ENCODE measurements at regions of chr5 and their contacts with region 1.

Region 1: DNA sequence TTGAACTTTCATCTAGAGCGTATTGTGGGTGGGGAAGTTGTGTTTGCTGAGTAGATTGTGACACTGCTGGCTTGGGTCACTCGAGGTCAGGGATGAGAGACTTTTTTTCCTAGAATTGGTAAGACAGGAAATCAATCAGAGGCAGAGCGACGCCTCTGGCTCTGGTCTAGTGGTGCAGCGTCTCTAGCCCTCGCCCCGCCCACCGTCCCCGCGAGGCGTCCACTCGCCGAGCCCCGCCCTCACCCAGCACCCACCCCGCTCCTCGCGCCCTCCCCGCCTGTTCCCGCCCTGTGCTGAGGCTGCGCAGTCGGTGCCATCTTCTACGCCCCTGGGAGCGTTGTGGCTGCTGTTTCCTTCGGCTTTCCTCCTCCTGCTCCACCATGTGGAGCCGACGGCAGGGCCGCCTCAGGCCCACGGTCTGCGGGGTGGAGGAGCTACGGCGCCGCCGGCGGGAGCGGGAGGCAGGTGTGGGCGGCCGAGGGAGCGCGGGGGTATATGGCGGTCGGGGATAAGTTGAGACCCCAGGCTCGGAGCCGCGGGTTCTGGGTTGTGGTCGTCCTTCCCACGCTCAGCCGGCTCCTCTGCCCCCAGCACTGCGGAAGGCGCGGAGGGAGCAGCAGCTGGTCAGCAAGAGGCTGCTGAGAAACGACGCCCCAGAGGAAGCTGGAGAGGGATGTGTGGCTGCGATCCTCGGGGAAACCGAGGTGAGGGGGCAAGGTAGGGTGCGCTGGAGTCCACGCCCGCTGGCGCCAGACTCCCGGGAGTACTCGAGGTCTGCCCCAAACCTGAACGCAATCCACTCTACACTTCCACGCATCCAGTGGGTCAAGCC is at the start of gene TMCO6:
- DNase-seq: peak; percentile 86
- ATAC-seq: peak; percentile 98
- H3K4me3 ChIP-seq: peak within 1 kb of the TSS; percentile 84 to 86
- H3K27ac ChIP-seq: peak within 1 kb of the TSS; percentile 92
- H3K4me1 ChIP-seq: 0 out of 2 replicates have a peak, but pooled peaks cover 5% of the 10 kb centered on the region
- H3K27me3 ChIP-seq: no peaks in the 10 kb centered on the region
- CTCF ChIP-seq: peak; percentile 87
- total RNA-seq, gene TMCO6: 18.9 TPM

Region 2: DNA sequence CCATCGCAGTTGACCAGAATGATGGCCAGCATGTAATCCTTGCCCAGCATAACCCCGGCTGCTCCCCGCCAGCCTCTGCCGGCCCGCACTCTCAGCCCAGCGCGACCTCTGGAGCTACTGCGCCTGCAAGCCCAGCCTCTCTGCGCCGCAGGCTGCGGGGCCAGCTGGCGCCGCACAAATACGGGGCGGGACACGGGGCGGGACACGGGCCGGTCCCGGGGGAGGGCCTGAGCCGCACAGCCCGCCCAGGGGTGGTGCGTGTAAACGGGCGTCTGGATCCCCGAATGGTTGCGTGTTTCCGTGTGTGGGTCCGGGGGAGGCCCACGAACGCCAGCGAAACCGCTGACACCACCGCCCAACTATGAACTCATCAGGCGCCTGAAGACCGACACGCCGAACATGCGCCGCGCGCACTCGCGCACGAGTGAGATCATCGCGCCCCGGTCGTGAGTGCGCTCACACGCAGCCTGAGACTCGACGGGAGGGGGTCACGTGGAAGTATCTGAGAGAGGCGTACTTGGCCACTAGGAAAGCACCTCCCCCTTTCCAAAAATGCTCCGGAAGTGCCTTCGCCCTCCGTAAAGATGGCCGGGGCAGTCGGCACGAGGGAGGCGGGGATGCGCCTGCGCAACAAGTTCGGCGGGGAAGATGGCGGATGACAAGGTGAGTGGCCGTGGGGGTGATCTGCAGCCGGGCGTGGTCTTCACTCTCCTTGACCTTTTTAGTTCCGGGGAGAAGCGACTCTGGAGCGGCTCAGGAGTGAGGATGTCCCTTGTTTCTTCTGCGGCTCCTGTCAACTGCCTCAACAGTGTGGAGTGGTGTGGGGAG is 75.0 kb before region 1 on chr5 and contains the starts of genes APBB3 and SLC35A4:
- CTCF ChIA-PET with region 1: interaction called, 5 read pairs
- POLR2A ChIA-PET with region 1: no interaction called
- in situ Hi-C with region 1: no loop called
- intact Hi-C with region 1: loop called (anchors 5 kb)
- DNase-seq: peak; percentile 94
- ATAC-seq: peak; percentile 94
- H3K4me3 ChIP-seq: peak within 1 kb of the TSS; percentile 89 to 98
- H3K27ac ChIP-seq: peak within 1 kb of the TSS; percentile 99
- H3K4me1 ChIP-seq: peaks cover 22% of the 10 kb centered on the region
- H3K27me3 ChIP-seq: no peaks in the 10 kb centered on the region
- CTCF ChIP-seq: no peak
- total RNA-seq, gene APBB3: 28.6 TPM
- total RNA-seq, gene SLC35A4: 96.7 TPM